Mammary epithelial cell (primary cell): ENCODE measurements at regions of chr10 and their contacts with region 1.

Region 1: DNA sequence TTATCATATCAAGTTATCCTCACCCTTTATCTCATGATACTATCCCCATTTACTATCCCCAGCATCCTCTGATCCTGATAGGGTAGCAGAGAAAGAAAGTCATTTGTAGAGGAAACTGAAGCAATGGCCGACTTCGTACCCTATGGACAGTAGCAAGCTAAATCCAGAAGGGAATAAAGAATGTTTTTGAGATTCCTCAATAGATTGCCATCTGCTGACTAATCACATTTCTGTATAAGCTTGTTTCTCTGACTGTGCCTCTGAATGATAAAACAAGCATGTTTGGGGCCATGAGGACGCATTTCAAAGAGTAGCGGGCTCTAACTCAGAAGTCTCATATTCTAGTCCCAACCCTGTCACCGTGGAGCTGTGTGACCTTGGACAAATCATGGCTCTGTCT is 13.2 kb upstream of the FAM107B start:
- DNase-seq: no peak
- H3K4me3 ChIP-seq: no peak overlapping the region
- H3K27ac ChIP-seq: no peak overlapping the region
- H3K4me1 ChIP-seq: no peaks in the 10 kb centered on the region
- H3K27me3 ChIP-seq: no peaks in the 10 kb centered on the region
- CTCF ChIP-seq: no peak

Region 2: DNA sequence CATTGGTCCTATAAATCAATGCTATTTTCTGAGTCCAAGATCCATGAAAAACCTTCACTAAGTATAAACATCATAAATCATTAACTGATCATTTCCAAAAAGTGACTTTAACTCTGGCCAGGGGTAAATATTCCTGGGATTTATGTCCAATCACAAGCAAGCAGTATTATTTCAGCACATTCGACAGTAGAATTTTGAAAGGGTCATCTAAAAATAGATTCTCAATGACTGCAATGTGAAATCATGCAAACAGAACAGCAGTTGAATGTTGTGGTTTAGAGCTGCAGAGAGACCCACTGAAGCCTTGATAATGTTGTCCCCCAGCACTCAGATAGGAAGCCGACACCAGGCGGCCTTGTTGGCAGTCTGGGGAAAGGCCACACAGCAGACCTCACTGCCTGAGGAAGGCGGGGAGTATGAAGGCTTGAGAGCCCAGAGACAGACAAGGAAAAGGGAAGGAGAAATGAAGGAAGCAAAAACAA is 51.3 kb before region 1 on chr10:
- CTCF ChIA-PET with region 1: no interaction called
- dilution Hi-C with region 1: no loop called
- in situ Hi-C with region 1: no loop called
- intact Hi-C with region 1: no loop called
- DNase-seq: no peak
- H3K4me3 ChIP-seq: no peak overlapping the region
- H3K27ac ChIP-seq: no peak overlapping the region
- H3K4me1 ChIP-seq: no peaks in the 10 kb centered on the region
- H3K27me3 ChIP-seq: no peaks in the 10 kb centered on the region
- CTCF ChIP-seq: no peak

Region 3: DNA sequence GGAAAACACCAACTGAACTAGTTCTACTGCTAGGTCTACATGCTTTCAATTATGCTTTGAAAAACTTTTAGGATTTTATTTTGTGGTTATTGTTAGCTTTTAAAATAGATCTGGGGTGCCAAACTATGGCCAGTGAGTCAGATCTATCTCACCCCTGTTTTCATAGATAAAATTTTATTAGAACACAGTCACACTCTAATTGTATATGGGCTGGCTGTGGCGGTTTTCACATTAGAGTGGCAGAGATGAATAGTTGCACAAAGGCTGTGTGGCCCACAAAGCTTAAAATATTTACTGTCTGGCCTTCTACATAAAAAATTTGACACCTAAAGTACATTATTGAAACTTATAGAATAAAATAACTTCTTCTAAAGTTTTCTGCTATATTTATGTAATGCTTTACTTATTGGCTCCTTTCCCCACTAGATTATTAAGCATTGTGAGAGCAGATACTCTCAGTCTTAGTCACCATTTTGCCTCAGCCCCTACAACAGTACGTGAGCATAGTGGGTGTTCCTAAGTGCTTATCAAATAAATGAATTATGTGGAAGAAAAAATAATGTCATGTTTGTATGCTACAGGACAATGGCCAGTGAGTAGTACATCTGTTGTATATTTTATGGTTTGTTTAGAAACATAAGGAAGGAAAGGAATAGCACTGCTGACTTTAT is 85.3 kb after region 1 on chr10:
- CTCF ChIA-PET with region 1: no interaction called
- dilution Hi-C with region 1: loop called (anchors 5 kb)
- in situ Hi-C with region 1: no loop called
- intact Hi-C with region 1: no loop called
- DNase-seq: peak; percentile 29
- H3K4me3 ChIP-seq: no peak overlapping the region
- H3K27ac ChIP-seq: no peak overlapping the region
- H3K4me1 ChIP-seq: peaks cover 17% of the 10 kb centered on the region
- H3K27me3 ChIP-seq: no peaks in the 10 kb centered on the region
- CTCF ChIP-seq: no peak